ENCODE measurements at regions of chr9 and their contacts with region 1.

Region 1: GRCh38 chr9:114930056-114930812 is at the start of gene TNFSF8:
- DNase-seq: peak; percentile 78
- ATAC-seq: peak; percentile 80
- H3K4me3 Mint-ChIP-seq: peak within 1 kb of the TSS; percentile 98
- H3K27ac Mint-ChIP-seq: peak within 1 kb of the TSS; percentile 97
- H3K4me1 Mint-ChIP-seq: peaks cover 42% of the 10 kb centered on the region
- H3K27me3 Mint-ChIP-seq: no peaks in the 10 kb centered on the region
- total RNA-seq, gene TNFSF8: 54.2 to 56.4 TPM

Region 2: GRCh38 chr9:114691046-114691955 is 238.9 kb before region 1 on chr9:
- POLR2A ChIA-PET with region 1: interaction called, 25 read pairs
- DNase-seq: peak; percentile 57
- ATAC-seq: peak; percentile 93
- H3K4me3 Mint-ChIP-seq: peak overlapping the region; percentile 38
- H3K27ac Mint-ChIP-seq: peak overlapping the region; percentile 99
- H3K4me1 Mint-ChIP-seq: peaks cover 82% of the 10 kb centered on the region
- H3K27me3 Mint-ChIP-seq: no peaks in the 10 kb centered on the region

Region 3: DNA sequence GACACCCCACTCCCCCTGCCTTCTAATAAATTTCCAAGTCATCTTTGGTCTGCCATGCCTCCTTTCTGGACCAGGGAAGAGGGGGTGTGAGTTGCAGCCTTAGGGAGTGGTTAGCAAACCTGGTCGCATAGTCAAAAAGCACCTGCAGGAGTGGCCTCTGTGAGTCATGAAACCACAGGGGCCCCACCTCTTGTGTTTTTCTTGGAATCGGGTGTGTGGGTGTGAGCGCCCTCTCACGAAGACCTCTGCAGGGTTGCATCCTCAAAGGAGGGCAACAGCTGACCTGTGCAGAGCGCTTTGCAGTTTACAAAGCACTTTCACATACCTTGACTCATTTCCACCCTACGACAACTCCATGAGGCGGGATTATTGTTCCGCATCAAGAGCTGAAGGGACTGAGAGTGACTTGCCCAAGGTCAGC is 211.4 kb before region 1 on chr9:
- POLR2A ChIA-PET with region 1: interaction called, 21 read pairs
- DNase-seq: peak; percentile 88
- ATAC-seq: peak; percentile 97
- H3K4me3 Mint-ChIP-seq: peak overlapping the region; percentile 69
- H3K27ac Mint-ChIP-seq: peak overlapping the region; percentile 98
- H3K4me1 Mint-ChIP-seq: peaks cover 61% of the 10 kb centered on the region
- H3K27me3 Mint-ChIP-seq: no peaks in the 10 kb centered on the region

Region 4: DNA sequence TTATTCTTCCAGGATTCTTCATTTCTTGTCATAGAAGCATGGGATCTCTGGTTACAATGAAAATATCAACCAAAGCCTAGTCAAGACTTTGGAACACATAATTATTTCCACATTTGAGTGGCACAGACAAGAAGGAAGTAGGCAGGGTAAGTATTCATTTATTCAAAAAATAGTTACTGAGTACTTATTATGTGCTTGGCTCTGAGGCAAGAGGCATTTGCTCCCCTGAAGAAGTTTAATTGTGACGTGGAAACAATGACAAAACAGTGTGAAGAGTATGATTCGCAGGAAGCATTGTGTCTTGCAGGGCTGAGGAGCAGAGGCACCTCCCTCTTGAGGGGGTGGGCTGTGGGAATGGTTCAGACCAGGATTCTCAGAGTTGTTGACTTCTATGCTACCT is 79.4 kb before region 1 on chr9:
- POLR2A ChIA-PET with region 1: no interaction called
- DNase-seq: no peak
- ATAC-seq: no peak
- H3K4me3 Mint-ChIP-seq: no peak overlapping the region
- H3K27ac Mint-ChIP-seq: peak overlapping the region; percentile 8
- H3K4me1 Mint-ChIP-seq: peaks cover 10% of the 10 kb centered on the region
- H3K27me3 Mint-ChIP-seq: no peaks in the 10 kb centered on the region

Region 5: GRCh38 chr9:114898741-114899140 is 31.5 kb before region 1 on chr9:
- POLR2A ChIA-PET with region 1: interaction called, 137 read pairs
- DNase-seq: peak; percentile 79
- ATAC-seq: peak; percentile 91
- H3K4me3 Mint-ChIP-seq: no peak overlapping the region
- H3K27ac Mint-ChIP-seq: no peak overlapping the region
- H3K4me1 Mint-ChIP-seq: peaks cover 46% of the 10 kb centered on the region
- H3K27me3 Mint-ChIP-seq: no peaks in the 10 kb centered on the region

Region 6: DNA sequence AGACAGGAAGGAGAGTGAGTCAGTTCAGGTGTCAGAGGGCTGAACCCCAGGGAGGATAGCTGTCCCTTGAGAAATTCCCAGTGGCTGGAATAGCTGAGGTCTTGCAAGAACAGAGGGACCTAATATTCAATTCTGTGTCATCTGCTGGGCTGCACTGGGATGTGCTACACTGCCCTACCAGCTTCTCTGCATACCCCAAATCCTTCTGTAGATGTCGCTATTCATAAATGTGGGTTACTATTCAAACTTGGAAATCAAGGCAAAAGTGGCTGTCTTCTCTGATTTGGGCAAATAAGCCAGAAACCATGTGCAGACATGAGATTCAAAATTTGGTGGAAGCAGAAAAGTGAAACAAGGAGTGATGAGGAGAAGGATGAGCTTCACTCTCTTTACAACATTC is 16.1 kb before region 1 on chr9:
- POLR2A ChIA-PET with region 1: interaction called, 137 read pairs
- DNase-seq: no peak
- ATAC-seq: no peak
- H3K4me3 Mint-ChIP-seq: no peak overlapping the region
- H3K27ac Mint-ChIP-seq: no peak overlapping the region
- H3K4me1 Mint-ChIP-seq: peaks cover 67% of the 10 kb centered on the region
- H3K27me3 Mint-ChIP-seq: no peaks in the 10 kb centered on the region

Region 7: GRCh38 chr9:114958021-114958843 is 28.0 kb after region 1 on chr9:
- POLR2A ChIA-PET with region 1: interaction called, 31 read pairs
- DNase-seq: peak; percentile 54
- ATAC-seq: peak; percentile 96
- H3K4me3 Mint-ChIP-seq: peak overlapping the region; percentile 78
- H3K27ac Mint-ChIP-seq: peak overlapping the region; percentile 95
- H3K4me1 Mint-ChIP-seq: peaks cover 46% of the 10 kb centered on the region
- H3K27me3 Mint-ChIP-seq: no peaks in the 10 kb centered on the region

Region 8: GRCh38 chr9:115013998-115014397 is 83.8 kb after region 1 on chr9:
- POLR2A ChIA-PET with region 1: interaction called, 45 read pairs
- DNase-seq: peak; percentile 76
- ATAC-seq: peak; percentile 90
- H3K4me3 Mint-ChIP-seq: peak overlapping the region; percentile 26
- H3K27ac Mint-ChIP-seq: peak overlapping the region; percentile 73
- H3K4me1 Mint-ChIP-seq: peaks cover 49% of the 10 kb centered on the region
- H3K27me3 Mint-ChIP-seq: peaks cover 2% of the 10 kb centered on the region

Region 9: DNA sequence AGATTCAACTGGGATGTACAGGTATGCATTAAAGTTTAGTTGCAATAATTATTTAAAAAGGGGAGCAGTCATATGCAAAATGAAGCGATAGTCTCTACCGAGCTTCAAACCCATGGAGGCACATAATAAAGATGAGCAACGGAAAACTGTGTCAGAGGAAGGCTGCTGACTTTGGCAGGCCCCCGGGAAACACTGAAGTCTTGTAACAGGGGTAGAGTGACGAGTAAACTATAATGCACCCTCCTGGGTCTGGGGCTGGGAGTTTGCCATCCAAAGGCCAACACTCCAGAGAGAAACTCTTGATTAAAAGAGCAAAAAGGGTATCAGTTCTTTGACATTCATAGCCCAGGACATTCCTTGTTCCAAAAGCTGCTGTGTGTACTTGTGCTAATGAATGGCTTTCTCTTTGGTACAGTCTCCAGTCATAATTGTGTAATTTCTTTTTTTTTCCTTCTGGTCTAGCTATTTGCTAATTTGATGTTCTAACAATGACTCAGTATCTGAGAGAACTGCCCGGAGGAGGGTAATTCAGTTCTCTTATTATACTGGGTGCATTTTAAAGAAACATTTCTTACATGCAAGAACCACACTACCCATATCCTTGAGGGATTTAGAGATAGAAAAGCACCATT is 128.6 kb after region 1 on chr9:
- POLR2A ChIA-PET with region 1: no interaction called
- DNase-seq: no peak
- ATAC-seq: no peak
- H3K4me3 Mint-ChIP-seq: no peak overlapping the region
- H3K27ac Mint-ChIP-seq: no peak overlapping the region
- H3K4me1 Mint-ChIP-seq: no peaks in the 10 kb centered on the region
- H3K27me3 Mint-ChIP-seq: peaks cover 33% of the 10 kb centered on the region